ENCODE measurements at regions of chr16 and their contacts with region 1.

Region 1: GRCh38 chr16:30628627-30629540 is 18.7 kb upstream of the ZNF689 start:
- DNase-seq: peak; percentile 81 to 87
- H3K4me3 ChIP-seq: no peak overlapping the region
- H3K4me3 Mint-ChIP-seq: no peak overlapping the region
- H3K27ac Mint-ChIP-seq: no peak overlapping the region
- H3K4me1 ChIP-seq: no peaks in the 10 kb centered on the region
- H3K4me1 Mint-ChIP-seq: no peaks in the 10 kb centered on the region
- H3K27me3 ChIP-seq: no peaks in the 10 kb centered on the region
- H3K27me3 Mint-ChIP-seq: no peaks in the 10 kb centered on the region
- CTCF ChIP-seq: peak; percentile 76 to 90

Region 2: DNA sequence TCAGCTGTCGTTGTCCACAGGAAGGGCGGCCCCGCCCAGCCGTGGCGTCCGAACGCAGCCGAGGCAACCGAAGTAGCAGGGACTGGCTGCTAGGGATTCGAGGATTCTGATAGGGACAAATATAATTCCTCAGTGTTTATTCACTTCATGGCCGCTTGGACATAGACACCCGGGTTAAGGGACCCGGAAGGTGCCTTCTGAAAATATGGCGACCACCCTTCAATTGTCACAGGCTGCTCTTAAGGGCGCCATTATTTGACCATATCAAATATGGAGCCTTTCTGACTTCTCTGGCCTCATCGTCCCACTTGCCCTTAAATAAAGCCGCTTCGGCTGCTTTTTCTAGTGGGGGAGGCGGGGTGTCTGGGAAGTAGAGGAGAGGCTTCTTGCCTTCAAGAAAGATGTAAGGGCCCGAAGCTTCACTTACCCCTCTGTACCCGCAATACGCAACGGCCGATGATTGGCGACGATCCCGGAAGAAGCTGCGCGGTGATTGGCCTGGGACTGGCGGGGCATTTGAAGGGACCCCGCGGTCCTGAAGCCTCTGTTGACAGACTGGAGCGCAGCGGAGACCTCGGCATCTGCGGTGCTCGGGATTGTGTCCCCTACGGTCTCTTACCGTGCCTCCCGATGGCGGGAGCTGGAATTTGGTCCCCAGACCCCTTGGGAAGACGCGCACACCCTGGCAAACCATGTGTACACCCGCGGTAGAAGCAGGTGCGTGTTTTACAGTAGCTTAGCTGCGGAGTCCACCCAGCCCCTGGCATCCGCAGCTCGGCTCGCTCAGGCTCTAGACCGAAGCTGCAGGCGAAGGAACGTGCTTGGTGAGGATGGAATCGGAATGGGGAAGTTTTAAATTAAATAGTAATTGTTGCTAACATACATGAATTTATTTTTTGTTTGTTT is 56.9 kb before region 1 on chr16 and contains the start of gene ZNF688:
- CTCF ChIA-PET with region 1: no interaction called
- POLR2A ChIA-PET with region 1: interaction called, 10 read pairs
- intact Hi-C with region 1: loop called (anchors 2 kb)
- DNase-seq: peak; percentile 94 to 97
- H3K4me3 ChIP-seq: peak within 1 kb of the TSS; percentile 77
- H3K4me3 Mint-ChIP-seq: peak within 1 kb of the TSS; percentile 82
- H3K27ac Mint-ChIP-seq: peak within 1 kb of the TSS; percentile 93
- H3K4me1 ChIP-seq: no peaks in the 10 kb centered on the region
- H3K4me1 Mint-ChIP-seq: peaks cover 7% of the 10 kb centered on the region
- H3K27me3 ChIP-seq: no peaks in the 10 kb centered on the region
- H3K27me3 Mint-ChIP-seq: no peaks in the 10 kb centered on the region
- CTCF ChIP-seq: no peak
- total RNA-seq, gene ZNF688: 6.2 and 10.0 TPM in 2 replicates

Region 3: GRCh38 chr16:30585400-30586189 is 43.3 kb before region 1 on chr16 and contains the start of gene ZNF785:
- CTCF ChIA-PET with region 1: no interaction called
- POLR2A ChIA-PET with region 1: no interaction called
- intact Hi-C with region 1: loop called (anchors 2 kb)
- DNase-seq: peak; percentile 96 to 98
- H3K4me3 ChIP-seq: peak within 1 kb of the TSS; percentile 69
- H3K4me3 Mint-ChIP-seq: peak within 1 kb of the TSS; percentile 91
- H3K27ac Mint-ChIP-seq: peak within 1 kb of the TSS; percentile 91
- H3K4me1 ChIP-seq: no peaks in the 10 kb centered on the region
- H3K4me1 Mint-ChIP-seq: no peaks in the 10 kb centered on the region
- H3K27me3 ChIP-seq: no peaks in the 10 kb centered on the region
- H3K27me3 Mint-ChIP-seq: no peaks in the 10 kb centered on the region
- CTCF ChIP-seq: peak in 1 of 2 experiments; percentile 7
- total RNA-seq, gene ZNF785: 13.5 and 13.6 TPM in 2 replicates

Region 4: DNA sequence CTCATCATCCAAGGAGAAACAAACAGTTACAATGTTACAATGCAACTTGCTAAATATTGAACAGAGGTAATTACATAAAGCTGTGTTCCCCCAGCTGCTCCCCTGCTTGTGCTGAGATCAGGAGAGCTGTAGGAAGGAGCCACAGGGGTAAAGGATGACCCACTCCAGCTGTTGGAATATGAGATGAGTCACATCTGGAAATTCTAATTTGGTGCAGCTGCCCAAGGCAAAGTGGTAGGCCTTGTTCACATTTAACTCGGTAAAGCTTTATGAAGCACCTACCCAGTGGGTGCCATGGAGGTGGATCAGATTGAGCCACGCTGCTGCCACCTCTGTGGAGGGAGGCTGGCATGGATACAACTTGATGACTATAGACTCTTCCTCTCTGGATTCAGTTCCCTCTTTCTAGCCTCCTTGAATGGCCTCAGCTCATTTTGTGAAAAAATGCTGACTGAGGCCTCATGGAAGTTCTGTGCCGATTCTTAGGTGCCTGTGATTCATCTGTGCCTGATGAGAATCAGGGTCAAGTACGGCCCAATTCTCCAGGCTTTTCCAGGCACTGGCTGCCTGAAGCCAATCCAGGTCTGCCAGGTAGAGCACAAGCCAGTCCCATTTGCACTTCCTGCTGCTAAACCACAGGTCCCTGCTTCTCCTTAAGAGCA is 26.1 kb before region 1 on chr16:
- CTCF ChIA-PET with region 1: no interaction called
- POLR2A ChIA-PET with region 1: interaction called, 4 read pairs
- intact Hi-C with region 1: loop called (anchors 5 kb)
- DNase-seq: no peak
- H3K4me3 ChIP-seq: no peak overlapping the region
- H3K4me3 Mint-ChIP-seq: no peak overlapping the region
- H3K27ac Mint-ChIP-seq: no peak overlapping the region
- H3K4me1 ChIP-seq: no peaks in the 10 kb centered on the region
- H3K4me1 Mint-ChIP-seq: no peaks in the 10 kb centered on the region
- H3K27me3 ChIP-seq: no peaks in the 10 kb centered on the region
- H3K27me3 Mint-ChIP-seq: no peaks in the 10 kb centered on the region
- CTCF ChIP-seq: no peak

Region 5: GRCh38 chr16:30609926-30610839 is 18.7 kb before region 1 on chr16 and contains the start of gene ZNF689:
- CTCF ChIA-PET with region 1: interaction called, 7 read pairs
- POLR2A ChIA-PET with region 1: interaction called, 10 read pairs
- intact Hi-C with region 1: loop called (anchors 2 kb)
- DNase-seq: peak; percentile 95
- H3K4me3 ChIP-seq: peak within 1 kb of the TSS; percentile 77
- H3K4me3 Mint-ChIP-seq: peak within 1 kb of the TSS; percentile 79
- H3K27ac Mint-ChIP-seq: peak within 1 kb of the TSS; percentile 89
- H3K4me1 ChIP-seq: no peaks in the 10 kb centered on the region
- H3K4me1 Mint-ChIP-seq: no peaks in the 10 kb centered on the region
- H3K27me3 ChIP-seq: no peaks in the 10 kb centered on the region
- H3K27me3 Mint-ChIP-seq: no peaks in the 10 kb centered on the region
- CTCF ChIP-seq: no peak
- total RNA-seq, gene ZNF689: 11.4 and 11.7 TPM in 2 replicates

Region 6: DNA sequence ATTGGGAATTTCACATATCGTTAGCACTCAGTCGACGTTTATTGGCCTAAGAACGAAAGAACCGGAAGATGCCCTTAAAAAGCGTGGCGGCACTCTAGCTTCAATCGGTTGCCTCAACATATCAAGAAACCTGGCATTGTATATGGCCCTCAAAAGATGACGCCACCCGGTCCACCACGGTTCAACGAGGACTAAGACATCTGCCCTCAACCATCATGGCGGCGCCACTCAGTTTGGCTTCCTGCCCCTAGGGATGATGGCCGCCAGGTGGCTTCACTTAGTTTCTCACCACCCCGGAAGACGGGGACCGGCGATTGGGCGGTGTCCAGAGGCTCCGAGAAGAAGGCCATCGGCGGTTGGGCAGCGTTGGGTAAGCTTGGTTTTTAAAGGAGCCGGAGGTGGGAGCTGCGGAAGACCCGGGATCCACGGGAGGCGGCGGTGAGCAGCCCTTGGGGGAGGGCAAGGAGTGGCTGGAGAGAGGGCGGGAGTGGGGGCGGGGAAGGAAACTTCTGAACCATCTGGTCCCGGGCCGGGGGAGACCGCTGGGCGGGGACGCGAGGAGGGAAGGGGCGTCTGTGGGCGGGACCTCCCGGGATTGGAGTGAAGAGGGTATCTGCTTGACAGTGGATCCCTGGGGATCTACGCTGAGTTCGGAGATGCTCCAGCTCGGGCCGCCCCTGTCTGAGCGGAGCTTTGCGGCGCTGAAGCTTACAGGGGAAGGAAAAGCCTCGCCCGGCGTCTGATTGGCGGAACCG is 21.7 kb after region 1 on chr16 and contains the start of gene PRR14:
- CTCF ChIA-PET with region 1: interaction called, 10 read pairs
- POLR2A ChIA-PET with region 1: interaction called, 8 read pairs
- intact Hi-C with region 1: loop called (anchors 2 kb)
- DNase-seq: peak; percentile 98 to 99
- H3K4me3 ChIP-seq: peak within 1 kb of the TSS; percentile 80
- H3K4me3 Mint-ChIP-seq: peak within 1 kb of the TSS; percentile 86
- H3K27ac Mint-ChIP-seq: peak within 1 kb of the TSS; percentile 78
- H3K4me1 ChIP-seq: peaks cover 3% of the 10 kb centered on the region; the same call in 1 of the 2 replicates
- H3K4me1 Mint-ChIP-seq: peaks cover 12% of the 10 kb centered on the region
- H3K27me3 ChIP-seq: no peaks in the 10 kb centered on the region
- H3K27me3 Mint-ChIP-seq: no peaks in the 10 kb centered on the region
- CTCF ChIP-seq: peak; percentile 1 to 36
- total RNA-seq, gene PRR14: 26.3 and 28.2 TPM in 2 replicates

Measured in Caco-2 (cell line).